K562 (cell line): ENCODE measurements at regions of chr4 and their contacts with region 1.

Region 1: GRCh38 chr4:98838977-98839618 is 89.8 kb downstream of the EIF4E start:
- DNase-seq: peak; percentile 24 to 72 (median 40)
- ATAC-seq: peak; percentile 92
- H3K4me3 ChIP-seq: no peak overlapping the region
- H3K27ac ChIP-seq: peak overlapping the region; percentile 14; the same call in 2 of the 3 replicates
- H3K4me1 ChIP-seq: peaks cover 0 to 7% of the 10 kb centered on the region in 2 experiments; a peak in 3 of 5 replicates
- H3K27me3 ChIP-seq: no peaks in the 10 kb centered on the region
- CTCF ChIP-seq: peak in 2 of 3 experiments; percentile 13 to 37; a peak in 2 of 6 replicates
- EP300 ChIP-seq: 0 out of 2 replicates have a peak, but pooled peaks have one; percentile 11
- POLR2A ChIP-seq: no peak
- RAD21 ChIP-seq: peak in 1 of 2 experiments; percentile 35; a peak in 1 of 4 replicates

Region 2: DNA sequence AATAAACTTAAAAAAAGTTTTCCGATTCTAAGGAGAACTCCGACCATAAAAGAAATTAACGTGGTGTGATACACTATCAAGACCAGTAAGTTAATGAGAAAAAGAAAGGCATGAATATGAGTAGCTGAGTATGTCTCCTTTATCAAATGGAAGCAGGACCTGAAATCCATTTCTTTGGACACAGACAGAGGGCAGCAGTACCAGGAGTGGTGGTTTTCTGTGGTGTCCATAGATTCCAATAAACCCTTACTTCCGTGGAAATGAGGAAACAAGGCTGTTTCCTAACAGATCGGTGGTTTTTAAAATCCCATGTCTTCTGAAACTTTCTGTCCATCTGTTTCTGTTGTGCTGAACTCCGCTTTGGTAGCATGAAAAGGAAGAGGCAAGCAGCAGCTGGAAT is 52.2 kb before region 1 on chr4:
- CTCF ChIA-PET with region 1: no interaction called
- POLR2A ChIA-PET with region 1: no interaction called
- in situ Hi-C with region 1: no loop called
- intact Hi-C with region 1: loop called (anchors 5 kb)
- DNase-seq: peak in 2 of 4 experiments; percentile 33 to 54
- ATAC-seq: peak; percentile 91
- H3K4me3 ChIP-seq: no peak overlapping the region
- H3K27ac ChIP-seq: no peak overlapping the region
- H3K4me1 ChIP-seq: 0 out of 5 replicates have a peak, but pooled peaks cover 0 to 4% of the 10 kb centered on the region in 2 experiments
- H3K27me3 ChIP-seq: peaks cover 0 to 5% of the 10 kb centered on the region in 2 experiments; a peak in 1 of 5 replicates
- CTCF ChIP-seq: peak; percentile 38 to 62 (median 53); a peak in 5 of 6 replicates
- EP300 ChIP-seq: no peak
- POLR2A ChIP-seq: no peak
- RAD21 ChIP-seq: peak; percentile 28 to 66; a peak in 3 of 4 replicates